PC-3 (cell line): ENCODE measurements at regions of chr6 and their contacts with region 1.

Region 1: GRCh38 chr6:113414511-113414910 is 442.6 kb upstream of the MARCKS start:
- DNase-seq: peak; percentile 82
- ATAC-seq: peak; percentile 98
- H3K4me3 ChIP-seq: no peak overlapping the region
- H3K27ac ChIP-seq: no peak overlapping the region
- H3K4me1 ChIP-seq: peaks cover 24% of the 10 kb centered on the region
- H3K27me3 ChIP-seq: no peaks in the 10 kb centered on the region
- CTCF ChIP-seq: peak; percentile 64

Region 2: DNA sequence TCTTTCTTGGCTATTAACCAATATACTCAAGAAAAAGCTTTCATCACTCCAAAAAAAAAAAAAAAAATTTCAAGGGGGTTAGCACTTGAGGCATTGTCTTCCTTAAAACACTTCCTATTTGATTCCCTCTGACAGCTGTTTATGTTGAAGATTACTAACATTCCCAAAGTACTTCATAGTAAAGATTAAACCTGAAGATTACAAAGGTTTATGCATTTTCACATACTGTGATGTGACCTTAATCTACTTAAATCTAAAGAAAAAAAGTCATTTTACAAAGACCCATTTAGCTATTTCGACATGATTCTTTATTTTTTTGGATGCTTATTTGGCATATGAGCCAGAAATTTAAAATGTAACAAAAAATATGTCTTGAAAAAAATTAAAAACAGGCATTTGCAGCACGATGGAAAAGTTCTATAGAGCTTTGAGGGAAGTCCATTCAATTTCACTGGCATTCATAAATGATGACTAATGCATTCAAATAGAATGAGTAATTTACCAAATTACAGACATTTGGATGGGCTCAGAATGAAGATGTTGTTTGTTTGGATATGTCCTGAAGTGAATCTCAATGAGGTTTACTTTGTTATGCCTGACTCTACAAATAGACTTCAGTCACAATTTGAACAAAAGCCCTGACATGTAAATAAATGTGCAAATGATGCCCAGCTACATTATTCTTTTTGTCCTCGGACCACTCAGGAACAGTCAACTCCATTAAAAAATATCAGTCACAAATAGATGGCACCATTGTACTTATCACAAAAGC is 232.0 kb before region 1 on chr6:
- CTCF ChIA-PET with region 1: no interaction called
- POLR2A ChIA-PET with region 1: no interaction called
- intact Hi-C with region 1: loop called (anchors 2 kb)
- DNase-seq: peak; percentile 85
- ATAC-seq: peak; percentile 87
- H3K4me3 ChIP-seq: peak overlapping the region; percentile 20; the same call in 1 of the 2 replicates
- H3K27ac ChIP-seq: peak overlapping the region; percentile 39; the same call in 1 of the 2 replicates
- H3K4me1 ChIP-seq: peaks cover 21% of the 10 kb centered on the region
- H3K27me3 ChIP-seq: no peaks in the 10 kb centered on the region
- CTCF ChIP-seq: no peak; the same call in 1 of the 2 replicates

Region 3: DNA sequence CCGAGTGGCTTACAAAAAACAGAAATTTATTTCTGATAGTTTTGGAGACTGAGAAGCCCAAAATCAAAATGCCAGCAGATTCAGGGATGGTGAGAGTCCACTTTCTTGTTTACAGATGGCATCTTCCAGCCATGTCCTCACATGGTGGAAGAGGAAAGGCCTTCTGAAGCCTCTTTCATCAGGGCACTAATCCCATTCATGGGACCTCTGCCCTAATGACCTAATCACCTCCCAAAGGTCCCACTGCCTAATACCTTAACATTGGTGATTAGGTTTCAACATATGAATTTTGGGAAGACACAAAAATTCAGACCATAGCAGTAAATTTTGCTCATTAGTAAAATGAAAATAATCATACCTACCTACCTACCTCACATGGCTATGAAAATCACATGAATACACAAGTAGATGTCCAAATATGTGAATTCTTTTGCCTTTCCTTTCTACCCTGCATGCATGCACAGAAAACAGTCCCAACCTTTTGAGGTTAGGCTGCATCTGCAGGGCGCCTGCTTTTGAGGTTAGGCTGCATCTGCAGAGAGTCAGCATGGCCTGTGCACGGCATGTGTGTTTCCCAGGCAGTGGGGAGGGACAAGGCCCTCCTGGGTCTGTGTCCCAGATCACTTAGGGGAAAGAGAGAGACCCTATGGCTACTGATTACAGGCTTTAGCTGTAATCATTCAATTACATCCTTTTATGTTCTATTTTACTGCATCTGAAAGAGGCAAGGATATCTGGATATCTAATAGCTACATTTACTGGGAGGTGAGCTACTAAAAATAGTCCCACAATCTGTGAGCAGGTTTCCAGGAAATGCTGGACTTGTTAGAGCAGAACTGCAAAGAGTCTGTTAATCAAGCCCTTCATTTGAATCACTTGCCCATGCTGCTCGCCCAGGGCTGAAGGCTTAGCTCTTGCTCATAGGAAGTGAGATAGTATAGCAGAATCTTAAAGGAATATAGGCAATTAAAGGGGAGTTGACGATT is 55.1 kb before region 1 on chr6:
- CTCF ChIA-PET with region 1: no interaction called
- POLR2A ChIA-PET with region 1: no interaction called
- intact Hi-C with region 1: loop called (anchors 5 kb)
- DNase-seq: peak; percentile 68
- ATAC-seq: peak; percentile 76
- H3K4me3 ChIP-seq: no peak overlapping the region
- H3K27ac ChIP-seq: peak overlapping the region; percentile 53
- H3K4me1 ChIP-seq: peaks cover 48% of the 10 kb centered on the region
- H3K27me3 ChIP-seq: no peaks in the 10 kb centered on the region
- CTCF ChIP-seq: no peak

Region 4: DNA sequence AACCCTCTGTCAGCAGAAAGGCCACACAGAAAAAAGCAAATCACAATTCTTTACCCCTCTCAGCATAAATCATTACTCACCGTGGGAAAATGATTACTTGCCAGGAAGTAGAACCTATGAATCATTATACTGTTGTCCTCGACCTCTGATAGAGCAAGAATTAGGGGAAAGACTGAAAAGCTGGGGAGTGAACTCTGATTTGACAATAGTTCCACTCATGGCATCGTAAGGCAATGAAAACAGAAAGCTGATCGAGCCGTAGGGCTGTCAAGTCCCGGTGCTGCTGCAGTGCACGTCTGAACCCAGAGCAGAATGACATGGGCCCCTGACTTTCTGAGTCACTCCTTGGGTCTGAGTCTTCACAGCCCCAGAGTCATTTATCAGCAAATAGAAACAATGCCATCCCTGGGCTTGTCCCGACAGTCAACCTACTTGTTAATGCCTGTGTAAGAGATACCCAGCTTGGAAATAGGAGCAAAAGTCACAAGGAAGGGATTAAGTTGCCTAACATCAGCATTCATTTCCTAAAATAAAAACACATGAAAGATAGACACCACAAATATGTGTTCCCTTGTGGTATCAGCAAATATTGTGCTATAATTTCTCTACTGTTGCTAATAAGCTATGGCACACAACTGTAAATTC is 217.8 kb after region 1 on chr6:
- CTCF ChIA-PET with region 1: no interaction called
- POLR2A ChIA-PET with region 1: interaction called, 3 read pairs
- intact Hi-C with region 1: loop called (anchors 10 kb)
- DNase-seq: peak; percentile 89
- ATAC-seq: peak; percentile 89
- H3K4me3 ChIP-seq: peak overlapping the region; percentile 60
- H3K27ac ChIP-seq: peak overlapping the region; percentile 97
- H3K4me1 ChIP-seq: peaks cover 39% of the 10 kb centered on the region
- H3K27me3 ChIP-seq: no peaks in the 10 kb centered on the region
- CTCF ChIP-seq: no peak

Region 5: DNA sequence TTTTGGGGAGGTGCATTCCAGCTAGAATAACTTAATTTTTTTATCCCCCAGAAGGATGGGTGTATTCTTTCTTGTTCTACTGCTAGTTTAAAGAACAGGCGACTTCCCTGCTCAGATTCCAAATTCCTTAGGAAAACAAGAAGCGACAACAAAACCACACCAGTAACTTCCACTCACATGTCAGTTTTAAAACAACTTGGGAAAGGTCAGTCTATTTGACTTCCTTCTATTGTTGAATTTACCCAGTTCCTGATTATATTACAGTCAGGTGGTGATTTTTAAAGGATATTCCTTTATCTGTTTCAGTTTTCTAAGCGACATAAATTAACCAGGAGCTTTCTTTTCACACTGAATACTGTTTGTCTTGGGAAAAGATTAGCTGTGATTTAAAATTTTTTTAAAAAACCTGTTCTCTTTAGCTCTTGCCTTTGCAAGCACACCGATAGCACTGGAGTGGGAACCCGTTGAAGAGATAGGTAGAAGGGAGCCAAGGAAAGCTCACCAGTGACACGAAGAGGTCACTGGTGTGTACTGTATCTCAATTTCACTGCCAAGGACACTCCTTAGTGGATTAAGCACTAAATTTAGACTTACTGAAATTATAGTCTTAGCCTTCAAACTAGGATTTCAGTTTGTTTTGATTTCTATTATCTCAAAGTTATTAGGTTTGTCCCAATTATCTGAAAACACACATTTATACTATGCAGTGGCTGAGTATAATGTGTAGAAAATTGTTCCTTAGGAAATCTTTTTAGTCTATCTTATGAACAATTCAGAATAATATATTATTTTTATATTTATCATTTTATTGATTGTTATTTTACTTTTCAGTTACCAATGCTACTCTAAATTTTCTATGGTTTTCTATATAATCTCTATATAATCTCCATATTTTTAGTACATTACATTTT is 464.9 kb after region 1 on chr6:
- CTCF ChIA-PET with region 1: no interaction called
- POLR2A ChIA-PET with region 1: no interaction called
- intact Hi-C with region 1: loop called (anchors 5 kb)
- DNase-seq: peak; percentile 76
- ATAC-seq: peak; percentile 95
- H3K4me3 ChIP-seq: no peak overlapping the region
- H3K27ac ChIP-seq: no peak overlapping the region
- H3K4me1 ChIP-seq: peaks cover 8% of the 10 kb centered on the region; the same call in 1 of the 2 replicates
- H3K27me3 ChIP-seq: no peaks in the 10 kb centered on the region
- CTCF ChIP-seq: peak; percentile 76